ENCODE measurements at regions of chr1 and their contacts with region 1.

Region 1: DNA sequence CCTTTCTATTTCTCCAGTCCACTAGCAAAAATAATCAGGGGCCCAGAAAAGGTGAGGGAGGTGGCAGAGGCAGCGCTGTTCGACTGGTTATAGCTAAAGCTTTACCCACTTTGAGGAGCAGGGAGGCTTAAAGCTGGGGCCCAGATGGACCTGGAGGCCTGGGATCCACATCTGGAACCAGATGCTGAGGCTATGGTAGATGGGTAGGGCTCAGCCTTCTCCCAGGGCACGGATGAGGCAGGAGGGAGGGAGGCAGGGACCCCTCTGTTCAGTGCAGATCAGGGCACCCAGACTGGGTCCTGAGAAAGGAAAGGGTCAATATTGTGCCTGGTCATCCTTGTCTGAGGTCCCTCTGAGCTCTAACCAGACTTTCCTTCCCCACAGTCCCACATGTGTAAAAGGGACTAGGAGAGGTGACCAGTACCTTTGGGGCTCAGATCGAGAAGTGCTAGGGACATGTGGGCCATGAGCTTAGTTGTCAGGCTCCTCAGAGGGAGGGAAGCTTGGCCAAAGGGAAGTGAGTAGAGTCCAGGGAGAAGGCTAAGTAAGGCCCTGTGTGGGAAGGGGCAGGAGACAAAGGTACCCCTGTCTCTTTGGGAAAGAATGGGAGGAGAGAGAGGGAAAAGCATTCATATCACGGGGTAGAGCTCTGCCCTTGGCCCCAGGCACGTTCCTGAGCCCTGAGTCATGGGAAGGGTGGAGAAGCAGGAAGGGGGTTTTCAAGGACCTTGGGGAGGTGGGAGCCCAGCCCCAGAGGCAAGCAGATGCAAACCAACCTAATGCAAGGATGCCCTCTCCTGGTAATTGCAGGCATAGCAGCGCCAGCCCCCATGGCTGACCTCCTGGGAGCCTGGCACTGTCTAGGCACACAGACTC is 15.4 kb downstream of the LMNA start:
- DNase-seq: peak; percentile 100
- ATAC-seq: peak; percentile 46
- H3K4me3 ChIP-seq: peak overlapping the region; percentile 58; the same call in 1 of the 2 replicates
- H3K27ac ChIP-seq: peak overlapping the region; percentile 98
- H3K4me1 ChIP-seq: peaks cover 55% of the 10 kb centered on the region
- H3K27me3 ChIP-seq: no peaks in the 10 kb centered on the region
- CTCF ChIP-seq: peak; percentile 99

Region 2: DNA sequence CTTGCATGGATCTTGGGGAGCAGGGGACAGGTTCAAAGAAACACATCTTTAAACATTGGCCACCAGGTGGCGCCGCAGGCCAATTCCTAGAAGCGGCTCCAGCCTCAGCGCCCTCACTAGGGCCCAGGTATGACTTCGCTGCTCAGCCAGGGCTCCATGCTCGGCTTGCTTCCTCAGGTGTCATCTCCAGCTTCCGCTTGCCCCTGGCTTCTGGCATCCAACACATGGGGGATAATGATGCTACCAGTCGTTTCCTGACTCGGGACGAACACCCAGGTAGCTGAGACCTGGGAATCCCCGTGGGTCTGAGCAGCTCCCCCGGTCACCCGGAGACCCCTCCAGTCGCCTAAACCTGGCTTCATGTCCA is 39.1 kb before region 1 on chr1:
- CTCF ChIA-PET with region 1: interaction called, 22 read pairs
- POLR2A ChIA-PET with region 1: interaction called, 7 read pairs
- intact Hi-C with region 1: loop called (anchors 1 kb)
- DNase-seq: peak; percentile 97
- ATAC-seq: peak; percentile 95
- H3K4me3 ChIP-seq: no peak overlapping the region
- H3K27ac ChIP-seq: no peak overlapping the region
- H3K4me1 ChIP-seq: peaks cover 21% of the 10 kb centered on the region
- H3K27me3 ChIP-seq: no peaks in the 10 kb centered on the region
- CTCF ChIP-seq: peak; percentile 96

Region 3: GRCh38 chr1:156096640-156097391 is 33.1 kb before region 1 on chr1:
- CTCF ChIA-PET with region 1: interaction called, 22 read pairs
- POLR2A ChIA-PET with region 1: interaction called, 7 read pairs
- intact Hi-C with region 1: loop called (anchors 1 kb)
- DNase-seq: peak; percentile 93
- ATAC-seq: peak; percentile 97
- H3K4me3 ChIP-seq: no peak overlapping the region
- H3K27ac ChIP-seq: peak overlapping the region; percentile 69
- H3K4me1 ChIP-seq: peaks cover 45% of the 10 kb centered on the region
- H3K27me3 ChIP-seq: no peaks in the 10 kb centered on the region
- CTCF ChIP-seq: peak; percentile 99

Region 4: DNA sequence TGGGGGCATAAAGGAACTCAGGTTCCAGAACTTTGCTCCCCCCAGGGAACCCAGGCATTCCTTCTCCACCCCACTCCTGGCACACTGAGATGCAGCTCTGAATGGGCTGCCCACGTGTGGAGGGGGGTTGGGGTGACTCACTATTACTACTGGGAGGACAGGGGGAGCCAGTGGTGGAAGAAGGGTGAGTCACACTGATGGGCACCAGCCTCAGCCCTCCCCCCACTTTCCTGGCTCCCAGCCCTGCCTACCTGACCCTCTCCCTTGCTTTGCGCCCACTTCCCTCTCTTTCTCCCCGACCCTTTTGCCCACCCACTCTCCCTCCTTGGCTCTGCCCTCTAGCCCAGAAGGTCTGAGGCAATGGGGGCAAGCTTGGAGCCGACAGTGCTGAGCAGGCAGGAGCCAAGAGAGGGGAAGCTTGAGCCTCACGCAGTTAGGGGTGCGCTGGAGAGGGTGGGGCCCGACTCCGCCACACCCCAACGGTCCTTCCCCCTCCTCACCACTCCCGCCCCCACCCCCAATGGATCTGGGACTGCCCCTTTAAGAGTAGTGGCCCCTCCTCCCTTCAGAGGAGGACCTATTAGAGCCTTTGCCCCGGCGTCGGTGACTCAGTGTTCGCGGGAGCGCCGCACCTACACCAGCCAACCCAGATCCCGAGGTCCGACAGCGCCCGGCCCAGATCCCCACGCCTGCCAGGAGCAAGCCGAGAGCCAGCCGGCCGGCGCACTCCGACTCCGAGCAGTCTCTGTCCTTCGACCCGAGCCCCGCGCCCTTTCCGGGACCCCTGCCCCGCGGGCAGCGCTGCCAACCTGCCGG is 15.6 kb before region 1 on chr1 and contains the start of gene LMNA:
- CTCF ChIA-PET with region 1: interaction called, 9 read pairs
- POLR2A ChIA-PET with region 1: interaction called, 13 read pairs
- intact Hi-C with region 1: loop called (anchors 1 kb)
- DNase-seq: peak; percentile 98
- ATAC-seq: peak; percentile 67
- H3K4me3 ChIP-seq: peak within 1 kb of the TSS; percentile 86
- H3K27ac ChIP-seq: peak within 1 kb of the TSS; percentile 91
- H3K4me1 ChIP-seq: peaks cover 38% of the 10 kb centered on the region
- H3K27me3 ChIP-seq: no peaks in the 10 kb centered on the region
- CTCF ChIP-seq: no peak
- total RNA-seq, gene LMNA: 864 and 1,095 TPM in 2 replicates

Measured in PC-3 (cell line).